Gastrocnemius medialis (tissue), 4 donors: ENCODE measurements at regions of chr6 and their contacts with region 1.

Region 1: DNA sequence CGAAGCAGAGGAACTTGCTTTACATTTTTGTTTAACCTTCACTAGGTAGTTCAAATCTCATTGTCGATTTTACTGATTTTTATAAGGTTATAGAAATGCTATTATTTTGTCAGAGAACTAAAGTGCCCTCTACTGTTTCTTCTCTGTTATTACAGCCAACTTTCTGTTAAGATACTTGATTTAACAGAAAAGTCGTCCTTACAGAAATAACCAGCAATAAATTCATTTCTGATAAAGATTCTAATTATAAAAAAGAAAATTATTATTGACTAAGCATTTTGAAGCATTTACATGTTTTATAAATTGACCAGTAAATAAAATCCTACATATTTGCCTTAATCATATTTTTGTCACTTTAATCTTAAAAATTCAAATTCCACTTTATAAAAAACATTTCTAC is 60.8 kb downstream of the OGFRL1 start:
- DNase-seq: no peak
- ATAC-seq: no peak
- H3K4me3 ChIP-seq: no peak overlapping the region
- H3K27ac ChIP-seq: peak overlapping the region in 2 of 4 donors; percentile 39 to 51
- H3K4me1 ChIP-seq: peaks cover 9 to 18% of the 10 kb centered on the region in 2 donors
- H3K27me3 ChIP-seq: no peaks in the 10 kb centered on the region
- CTCF ChIP-seq: peak in 4 of 5 experiments; percentile 42 to 67 (median 57)
- POLR2A ChIP-seq: no peak

Region 2: DNA sequence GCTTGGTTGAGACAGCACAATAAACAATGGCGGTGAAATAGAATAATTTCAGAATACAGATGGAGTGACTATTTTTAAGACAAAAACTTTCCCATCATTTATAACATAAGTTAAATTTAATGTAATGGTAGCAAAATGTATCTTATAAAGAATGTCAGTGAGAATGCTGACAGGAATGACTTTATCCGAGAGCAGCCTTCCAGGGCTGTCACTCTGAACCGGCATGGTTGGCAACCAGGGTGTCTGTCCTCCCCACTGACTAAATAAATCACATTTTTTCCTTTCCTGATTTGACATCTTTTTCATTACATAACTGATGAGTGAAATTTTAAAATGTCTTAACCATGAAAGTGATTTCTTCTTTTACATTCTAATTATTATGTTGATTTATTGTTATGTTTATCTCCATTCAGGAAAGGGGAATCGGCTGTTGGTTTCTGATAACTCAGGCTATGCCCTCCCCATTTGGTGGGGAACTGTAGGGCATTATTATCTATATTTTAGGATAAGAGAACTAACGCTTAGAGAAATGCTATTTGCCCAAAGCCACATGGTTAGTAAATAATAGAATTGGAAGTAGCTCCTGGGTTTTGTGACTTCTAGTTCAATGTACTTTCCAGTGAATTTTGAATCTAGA is 170.0 kb before region 1 on chr6:
- in situ Hi-C with region 1: no loop called
- intact Hi-C with region 1: no loop called
- DNase-seq: no peak
- ATAC-seq: no peak
- H3K4me3 ChIP-seq: no peak overlapping the region
- H3K27ac ChIP-seq: no peak overlapping the region
- H3K4me1 ChIP-seq: no peaks in the 10 kb centered on the region
- H3K27me3 ChIP-seq: no peaks in the 10 kb centered on the region
- CTCF ChIP-seq: no peak
- POLR2A ChIP-seq: no peak

Region 3: GRCh38 chr6:71190809-71191208 is 158.6 kb before region 1 on chr6:
- in situ Hi-C with region 1: loop called in 2 of 4 experiments (anchors 5 kb)
- intact Hi-C with region 1: loop called (anchors 2 kb)
- DNase-seq: no peak
- ATAC-seq: no peak
- H3K4me3 ChIP-seq: no peak overlapping the region
- H3K27ac ChIP-seq: no peak overlapping the region
- H3K4me1 ChIP-seq: no peaks in the 10 kb centered on the region
- H3K27me3 ChIP-seq: no peaks in the 10 kb centered on the region
- CTCF ChIP-seq: peak in 3 of 5 experiments; percentile 21 to 31 (median 28)
- POLR2A ChIP-seq: no peak